HCT116 (cell line): ENCODE measurements at regions of chr1 and their contacts with region 1.

Region 1: DNA sequence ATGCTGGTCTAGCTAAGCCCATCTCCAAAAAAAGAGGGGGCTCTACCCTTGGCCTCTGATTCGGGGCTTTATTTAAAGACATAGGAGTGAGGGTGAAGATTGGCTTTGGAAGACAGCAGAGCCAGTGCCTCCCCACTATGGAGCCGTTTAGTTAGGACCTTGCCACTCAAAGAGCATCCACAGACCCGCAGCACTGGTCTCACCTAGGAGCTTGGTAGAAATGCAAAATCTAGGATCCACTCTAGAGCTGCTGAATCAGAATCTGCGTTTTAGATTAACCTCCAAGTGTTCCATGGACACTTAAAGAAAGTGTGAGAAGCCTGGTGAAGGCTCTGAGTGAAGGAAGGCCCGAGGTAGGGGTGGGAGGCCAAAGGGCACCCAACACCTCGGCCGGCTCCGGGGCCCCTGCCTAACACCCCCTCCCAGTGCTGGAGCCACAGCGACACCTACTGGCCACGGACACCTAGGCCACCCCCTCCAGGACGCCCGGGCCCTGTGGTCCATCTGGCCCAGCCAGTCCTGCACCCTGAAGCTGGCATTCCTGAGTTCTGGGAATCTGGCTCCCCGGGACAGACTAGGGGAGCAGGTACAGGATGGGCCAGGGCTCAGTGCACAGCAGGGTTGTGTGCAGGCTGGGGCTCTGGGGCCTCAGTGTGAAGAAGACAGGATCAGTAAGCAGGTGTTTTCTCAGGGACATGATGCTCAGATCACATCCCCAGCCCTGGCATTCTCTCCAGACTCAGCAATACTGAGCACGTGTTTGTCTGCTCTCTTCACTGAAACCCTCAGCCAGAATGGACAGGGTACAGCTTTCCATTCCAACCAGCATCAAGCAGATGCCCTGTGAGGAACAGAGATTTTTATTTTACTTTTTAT is 79.2 kb downstream of the TMEM53 start:
- DNase-seq: peak; percentile 24
- ATAC-seq: peak; percentile 100
- H3K4me3 ChIP-seq: no peak overlapping the region
- H3K27ac ChIP-seq: no peak overlapping the region
- H3K4me1 ChIP-seq: peaks cover 0 to 3% of the 10 kb centered on the region in 2 experiments; a peak in 1 of 4 replicates
- H3K27me3 ChIP-seq: peaks cover 20% of the 10 kb centered on the region
- CTCF ChIP-seq: peak; percentile 91 to 98 (median 97)
- POLR2A ChIP-seq: no peak
- RAD21 ChIP-seq: peak; percentile 98

Region 2: GRCh38 chr1:44217809-44218410 is 377.2 kb before region 1 on chr1:
- CTCF ChIA-PET with region 1: interaction called, 10 read pairs
- POLR2A ChIA-PET with region 1: no interaction called
- RAD21 ChIA-PET with region 1: interaction called in 1 of 2 experiments, 3 read pairs
- intact Hi-C with region 1: loop called (anchors 2 kb)
- DNase-seq: peak; percentile 38
- ATAC-seq: peak; percentile 78
- H3K4me3 ChIP-seq: no peak overlapping the region
- H3K27ac ChIP-seq: no peak overlapping the region
- H3K4me1 ChIP-seq: peaks cover 6 to 16% of the 10 kb centered on the region in 2 experiments; a peak in 3 of 4 replicates
- H3K27me3 ChIP-seq: no peaks in the 10 kb centered on the region
- CTCF ChIP-seq: peak; percentile 72 to 96 (median 94)
- POLR2A ChIP-seq: no peak
- RAD21 ChIP-seq: peak; percentile 86

Region 3: DNA sequence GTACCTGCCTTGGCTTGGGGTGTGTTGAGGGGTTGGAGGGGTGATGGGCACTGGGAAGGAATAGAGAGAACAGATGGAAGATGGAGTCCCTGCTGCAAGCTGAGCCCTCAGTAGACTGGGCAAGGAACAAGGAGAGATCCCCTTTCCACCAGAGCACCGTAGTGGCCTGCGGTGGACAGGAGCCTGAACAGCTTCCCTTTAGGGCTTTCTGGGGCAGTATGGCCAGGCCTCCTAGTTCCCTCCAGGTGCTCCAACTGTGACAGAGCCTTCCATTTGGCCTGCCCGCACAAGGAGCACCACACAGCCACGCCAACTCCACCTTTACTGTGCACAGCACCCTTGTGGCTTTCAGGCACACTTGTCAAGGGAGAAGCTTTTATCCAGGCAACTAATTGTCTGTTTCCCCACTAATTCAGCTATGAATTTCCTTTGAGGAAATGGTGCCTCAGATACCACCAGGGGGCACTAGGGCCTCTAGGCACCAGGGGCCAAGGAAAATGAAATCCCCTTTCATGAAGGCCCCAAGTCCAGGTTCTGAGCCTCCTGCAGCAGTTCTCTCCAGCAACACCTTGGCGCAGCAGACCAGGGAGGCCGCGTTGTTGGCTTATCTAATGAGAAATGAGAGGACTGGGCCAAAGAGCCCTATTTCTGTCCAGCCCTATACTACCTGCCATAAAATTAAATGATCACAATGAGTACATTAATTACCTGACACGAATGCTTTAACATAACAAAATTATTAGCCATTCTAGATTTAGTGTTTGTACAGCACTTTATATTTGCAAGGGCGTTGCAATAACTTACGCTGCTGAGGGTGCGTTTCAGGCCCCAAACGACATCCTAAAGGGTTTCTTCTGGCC is 217.0 kb before region 1 on chr1:
- CTCF ChIA-PET with region 1: interaction called, 96 read pairs
- POLR2A ChIA-PET with region 1: no interaction called
- RAD21 ChIA-PET with region 1: interaction called, 21 to 24 read pairs
- intact Hi-C with region 1: loop called (anchors 1 kb)
- DNase-seq: peak; percentile 32
- ATAC-seq: peak; percentile 88
- H3K4me3 ChIP-seq: no peak overlapping the region
- H3K27ac ChIP-seq: no peak overlapping the region
- H3K4me1 ChIP-seq: no peaks in the 10 kb centered on the region
- H3K27me3 ChIP-seq: no peaks in the 10 kb centered on the region
- CTCF ChIP-seq: peak; percentile 80 to 86 (median 80)
- POLR2A ChIP-seq: no peak
- RAD21 ChIP-seq: peak; percentile 90

Region 4: GRCh38 chr1:44584167-44584566 is 10.9 kb before region 1 on chr1:
- CTCF ChIA-PET with region 1: interaction called, 10 read pairs
- POLR2A ChIA-PET with region 1: no interaction called
- RAD21 ChIA-PET with region 1: no interaction called
- intact Hi-C with region 1: no loop called
- DNase-seq: no peak
- ATAC-seq: peak; percentile 30; the same call in 1 of the 2 replicates
- H3K4me3 ChIP-seq: no peak overlapping the region
- H3K27ac ChIP-seq: no peak overlapping the region
- H3K4me1 ChIP-seq: peaks cover 0 to 8% of the 10 kb centered on the region in 2 experiments; a peak in 2 of 4 replicates
- H3K27me3 ChIP-seq: peaks cover 18% of the 10 kb centered on the region; the same call in 1 of the 2 replicates
- CTCF ChIP-seq: no peak
- POLR2A ChIP-seq: no peak
- RAD21 ChIP-seq: no peak

Region 5: GRCh38 chr1:44645476-44646244 is 50.6 kb after region 1 on chr1:
- CTCF ChIA-PET with region 1: no interaction called
- POLR2A ChIA-PET with region 1: no interaction called
- RAD21 ChIA-PET with region 1: no interaction called
- intact Hi-C with region 1: no loop called
- DNase-seq: no peak
- ATAC-seq: no peak
- H3K4me3 ChIP-seq: no peak overlapping the region
- H3K27ac ChIP-seq: no peak overlapping the region
- H3K4me1 ChIP-seq: no peaks in the 10 kb centered on the region
- H3K27me3 ChIP-seq: no peaks in the 10 kb centered on the region
- CTCF ChIP-seq: no peak
- POLR2A ChIP-seq: no peak
- RAD21 ChIP-seq: no peak